Transverse colon (tissue), 4 donors: ENCODE measurements at regions of chr18 and their contacts with region 1.

Region 1: GRCh38 chr18:80034068-80034851 is at the start of gene RBFA:
- DNase-seq: peak; percentile 100
- H3K4me3 ChIP-seq: peak within 1 kb of the TSS; percentile 73 to 88 (median 77)
- H3K27ac ChIP-seq: peak within 1 kb of the TSS; percentile 90 to 94 (median 92)
- H3K4me1 ChIP-seq: peaks cover 8 to 12% (median 9%) of the 10 kb centered on the region in 4 donors
- H3K27me3 ChIP-seq: no peaks in the 10 kb centered on the region
- CTCF ChIP-seq: peak; percentile 39 to 77 (median 50)
- EP300 ChIP-seq: no peak
- POLR2A ChIP-seq: peak; percentile 51
- total RNA-seq, gene RBFA: 5.6 to 35.1 (median 25.8) TPM

Region 2: DNA sequence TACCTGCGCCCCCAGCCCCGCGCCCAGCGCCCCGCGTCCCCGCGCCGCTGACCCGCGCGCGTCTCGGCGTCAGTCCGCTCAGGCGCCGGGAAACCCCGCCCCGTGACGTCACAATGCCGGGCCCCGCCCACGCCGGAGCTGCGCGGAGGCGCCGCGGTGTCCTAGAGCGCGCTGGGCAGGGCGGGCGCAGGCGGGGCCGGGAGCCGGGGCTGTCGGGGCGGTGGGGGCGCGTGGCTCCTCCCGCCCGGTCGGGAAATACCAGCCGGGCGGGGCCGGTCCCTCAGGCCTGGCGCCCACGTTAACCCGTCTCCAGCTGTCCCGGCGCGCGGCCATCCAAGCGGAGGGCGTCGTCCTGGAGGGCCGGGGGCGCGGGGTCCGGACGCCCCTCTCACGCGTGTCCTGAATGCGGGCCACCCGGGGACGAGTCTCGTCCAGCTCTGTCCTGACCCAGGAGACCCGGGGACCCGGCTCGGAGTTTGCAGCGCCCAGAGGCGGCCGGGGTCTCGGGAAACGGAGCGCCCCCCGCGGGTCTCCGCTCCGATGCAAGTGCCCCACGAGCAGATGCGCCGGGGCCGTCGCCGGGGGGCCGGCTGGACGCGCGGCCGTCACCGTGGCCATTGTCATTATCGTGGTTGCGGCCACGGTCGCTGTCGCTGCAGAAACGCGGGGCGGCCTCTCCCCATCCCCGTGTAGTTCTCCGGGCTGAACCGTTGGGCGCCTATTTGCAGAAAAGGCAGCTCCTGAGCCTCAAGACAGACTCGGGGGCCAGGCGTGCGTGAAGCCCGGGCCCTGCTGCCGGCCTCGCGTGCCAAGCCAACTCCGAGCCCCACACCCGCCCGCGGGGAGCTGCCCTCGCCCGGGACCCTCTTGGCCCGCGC is 82.4 kb before region 1 on chr18 and contains the start of gene SLC66A2:
- in situ Hi-C with region 1: loop called in 1 of 4 experiments (anchors 10 kb)
- intact Hi-C with region 1: loop called (anchors 2 kb)
- DNase-seq: peak; percentile 96
- H3K4me3 ChIP-seq: peak within 1 kb of the TSS; percentile 95 to 98 (median 97)
- H3K27ac ChIP-seq: peak within 1 kb of the TSS; percentile 85 to 98 (median 96)
- H3K4me1 ChIP-seq: peaks cover 24 to 75% (median 49%) of the 10 kb centered on the region in 4 donors
- H3K27me3 ChIP-seq: no peaks in the 10 kb centered on the region
- CTCF ChIP-seq: no peak
- EP300 ChIP-seq: no peak
- POLR2A ChIP-seq: peak; percentile 73
- total RNA-seq, gene SLC66A2: 56.5 to 183 (median 92.9) TPM

Region 3: DNA sequence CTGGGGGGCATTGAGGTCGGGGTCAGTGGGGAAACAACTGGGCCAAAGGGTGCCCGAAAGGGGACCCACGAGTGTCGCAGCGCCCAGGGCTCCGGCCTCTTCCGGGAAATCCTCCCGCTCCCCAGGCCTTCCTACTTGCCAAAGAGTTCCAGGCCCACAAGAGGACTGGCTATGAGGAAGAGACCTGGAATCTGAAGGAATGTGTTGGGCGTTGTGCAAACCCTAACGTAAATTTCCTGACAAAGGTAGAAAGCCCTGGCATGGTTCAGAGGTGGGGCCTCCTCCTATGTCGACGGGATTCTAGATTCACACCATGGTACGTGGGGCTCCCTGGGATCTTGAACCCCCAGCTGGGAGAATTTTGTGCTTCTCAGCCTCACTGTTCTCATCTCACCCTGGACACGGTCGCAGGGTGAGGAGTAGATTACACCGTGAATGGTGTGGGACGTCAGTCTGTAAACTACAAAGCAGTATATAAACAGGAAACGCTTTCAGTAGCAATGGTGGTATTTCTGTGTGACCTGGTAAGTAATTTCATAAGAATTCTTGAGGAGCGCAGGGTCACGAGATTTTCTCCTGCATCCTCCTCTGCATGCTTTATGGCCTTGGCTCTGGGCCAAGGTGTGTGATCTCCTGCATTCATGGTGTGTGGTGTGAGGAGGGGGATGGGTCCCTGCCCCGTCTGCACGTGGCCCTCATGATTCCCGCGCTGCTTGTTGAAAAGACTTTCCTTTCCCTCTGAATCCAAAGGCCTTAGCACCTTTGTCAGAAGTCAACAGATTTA is 68.9 kb before region 1 on chr18:
- in situ Hi-C with region 1: no loop called
- intact Hi-C with region 1: no loop called
- DNase-seq: peak; percentile 80
- H3K4me3 ChIP-seq: peak overlapping the region; percentile 48 to 79 (median 71)
- H3K27ac ChIP-seq: peak overlapping the region; percentile 90 to 93 (median 92)
- H3K4me1 ChIP-seq: peaks cover 13 to 57% (median 37%) of the 10 kb centered on the region in 4 donors
- H3K27me3 ChIP-seq: no peaks in the 10 kb centered on the region
- CTCF ChIP-seq: no peak
- EP300 ChIP-seq: peak; percentile 3
- POLR2A ChIP-seq: peak; percentile 46

Region 4: GRCh38 chr18:80103231-80103630 is 69.0 kb after region 1 on chr18:
- in situ Hi-C with region 1: loop called in 1 of 4 experiments (anchors 5 kb)
- intact Hi-C with region 1: loop called (anchors 2 kb)
- DNase-seq: no peak
- H3K4me3 ChIP-seq: no peak overlapping the region
- H3K27ac ChIP-seq: peak overlapping the region in 1 of 4 donors; percentile 2
- H3K4me1 ChIP-seq: peaks cover 0 to 3% (median 0%) of the 10 kb centered on the region in 4 donors
- H3K27me3 ChIP-seq: no peaks in the 10 kb centered on the region
- CTCF ChIP-seq: no peak
- EP300 ChIP-seq: no peak
- POLR2A ChIP-seq: no peak

Region 5: DNA sequence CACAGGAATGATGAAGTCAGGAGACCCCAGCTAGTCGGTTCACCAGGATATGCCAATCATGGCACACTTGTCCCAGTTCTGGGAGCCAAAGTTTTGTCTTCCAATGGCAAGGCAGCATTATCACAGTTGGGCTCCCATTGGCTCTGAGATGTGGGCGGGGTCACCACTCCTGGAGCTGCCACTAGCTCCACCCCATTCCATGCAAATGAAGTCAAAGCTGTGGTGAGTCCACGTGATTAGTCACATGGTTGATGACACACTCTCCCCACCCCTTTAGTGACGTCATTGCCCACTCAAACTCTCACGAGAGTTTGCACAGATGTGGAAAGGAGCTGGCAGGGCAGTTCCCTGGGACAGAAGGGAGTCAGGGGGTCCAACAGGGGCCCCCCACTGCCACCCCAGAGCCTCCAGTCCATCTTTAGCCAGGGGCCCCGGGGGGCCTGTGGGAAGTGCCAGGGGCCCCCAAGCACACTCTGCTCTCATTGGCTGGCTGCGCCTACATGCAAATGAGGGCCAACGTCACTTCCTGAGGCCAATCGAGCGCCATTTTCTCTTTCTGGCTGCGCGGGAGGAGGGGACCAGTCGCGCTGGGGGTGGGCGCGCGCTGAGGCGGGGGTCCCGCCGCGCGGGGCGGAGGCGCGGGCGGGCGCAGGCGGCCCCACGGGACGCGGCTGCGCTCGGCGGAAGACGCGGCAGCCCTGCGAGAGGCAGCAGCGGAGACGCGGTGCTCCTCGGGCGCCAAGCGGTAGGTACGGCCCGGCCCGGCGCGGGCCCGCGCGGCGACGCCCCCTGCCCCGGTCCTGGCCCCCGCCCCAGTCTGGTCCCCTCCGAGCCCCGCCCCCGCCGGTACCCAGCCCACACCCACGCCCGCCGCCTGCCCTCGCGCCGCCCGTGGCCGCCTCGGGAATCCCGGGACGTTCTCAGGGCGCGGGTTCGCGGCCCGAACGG is 74.7 kb after region 1 on chr18 and contains the start of gene ADNP2:
- in situ Hi-C with region 1: loop called in 1 of 4 experiments (anchors 5 kb)
- intact Hi-C with region 1: loop called (anchors 2 kb)
- DNase-seq: peak; percentile 83
- H3K4me3 ChIP-seq: peak within 1 kb of the TSS; percentile 78 to 92 (median 90)
- H3K27ac ChIP-seq: peak within 1 kb of the TSS; percentile 86 to 90 (median 88)
- H3K4me1 ChIP-seq: peaks cover 0 to 24% (median 10%) of the 10 kb centered on the region in 4 donors
- H3K27me3 ChIP-seq: no peaks in the 10 kb centered on the region
- CTCF ChIP-seq: no peak
- EP300 ChIP-seq: no peak
- POLR2A ChIP-seq: no peak
- total RNA-seq, gene ADNP2: 16.0 to 30.1 (median 22.3) TPM